ENCODE measurements at regions of chr1 and their contacts with region 1.

Region 1: GRCh38 chr1:41573785-41574713 is 89.6 kb upstream of the EDN2 start:
- DNase-seq: peak; percentile 56
- ATAC-seq: peak; percentile 99
- H3K4me3 ChIP-seq: no peak overlapping the region
- H3K27ac ChIP-seq: no peak overlapping the region
- H3K4me1 ChIP-seq: peaks cover 14% of the 10 kb centered on the region
- H3K27me3 ChIP-seq: no peaks in the 10 kb centered on the region
- CTCF ChIP-seq: peak; percentile 95 to 98 (median 96); a peak in 5 of 6 replicates
- EP300 ChIP-seq: no peak
- POLR2A ChIP-seq: no peak
- RAD21 ChIP-seq: peak; percentile 99

Region 2: DNA sequence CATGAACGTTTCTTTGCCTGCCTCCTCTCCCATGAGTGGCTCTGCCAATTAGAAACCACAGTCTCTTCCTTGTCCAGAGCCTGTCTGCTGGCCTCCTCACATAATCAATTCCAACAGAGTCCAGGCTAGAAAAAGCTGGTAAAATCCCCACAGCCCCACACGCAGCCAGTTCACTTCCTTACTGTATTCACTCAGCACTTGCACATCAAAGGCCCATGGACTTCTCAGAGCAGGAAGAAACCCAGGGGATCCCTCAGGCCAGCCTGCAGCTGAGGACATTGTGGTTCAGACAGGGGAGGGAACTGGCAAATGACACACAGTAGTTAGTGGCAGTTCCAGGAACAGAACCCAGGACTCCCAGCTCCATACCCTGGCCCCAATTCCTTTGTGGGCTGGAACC is 82.0 kb after region 1 on chr1:
- CTCF ChIA-PET with region 1: interaction called, 66 read pairs
- POLR2A ChIA-PET with region 1: interaction called, 3 read pairs
- RAD21 ChIA-PET with region 1: interaction called, 58 read pairs
- SMC1A ChIA-PET with region 1: interaction called, 126 read pairs
- in situ Hi-C with region 1: no loop called
- intact Hi-C with region 1: loop called (anchors 2 kb)
- DNase-seq: no peak
- ATAC-seq: peak; percentile 42
- H3K4me3 ChIP-seq: no peak overlapping the region
- H3K27ac ChIP-seq: no peak overlapping the region
- H3K4me1 ChIP-seq: peaks cover 16% of the 10 kb centered on the region
- H3K27me3 ChIP-seq: no peaks in the 10 kb centered on the region
- CTCF ChIP-seq: no peak
- EP300 ChIP-seq: no peak
- POLR2A ChIP-seq: no peak
- RAD21 ChIP-seq: no peak

Region 3: GRCh38 chr1:41751804-41752513 is 177.9 kb after region 1 on chr1:
- CTCF ChIA-PET with region 1: interaction called, 8 read pairs
- POLR2A ChIA-PET with region 1: no interaction called
- RAD21 ChIA-PET with region 1: interaction called, 7 read pairs
- SMC1A ChIA-PET with region 1: interaction called, 10 read pairs
- in situ Hi-C with region 1: no loop called
- intact Hi-C with region 1: no loop called
- DNase-seq: peak; percentile 86
- ATAC-seq: peak; percentile 83
- H3K4me3 ChIP-seq: peak overlapping the region; percentile 18; the same call in 1 of the 2 replicates
- H3K27ac ChIP-seq: peak overlapping the region; percentile 83
- H3K4me1 ChIP-seq: peaks cover 55% of the 10 kb centered on the region
- H3K27me3 ChIP-seq: no peaks in the 10 kb centered on the region
- CTCF ChIP-seq: no peak
- EP300 ChIP-seq: peak; percentile 77 to 80; a peak in 3 of 4 replicates
- POLR2A ChIP-seq: 0 out of 2 replicates have a peak, but pooled peaks have one; percentile 17
- RAD21 ChIP-seq: no peak; the same call in 1 of the 2 replicates

Region 4: GRCh38 chr1:41802532-41803501 is 228.8 kb after region 1 on chr1:
- CTCF ChIA-PET with region 1: interaction called, 3 read pairs
- POLR2A ChIA-PET with region 1: no interaction called
- RAD21 ChIA-PET with region 1: interaction called, 4 read pairs
- SMC1A ChIA-PET with region 1: interaction called, 14 read pairs
- in situ Hi-C with region 1: no loop called
- intact Hi-C with region 1: no loop called
- DNase-seq: peak; percentile 85
- ATAC-seq: peak; percentile 50
- H3K4me3 ChIP-seq: no peak overlapping the region
- H3K27ac ChIP-seq: peak overlapping the region; percentile 74
- H3K4me1 ChIP-seq: peaks cover 86% of the 10 kb centered on the region
- H3K27me3 ChIP-seq: no peaks in the 10 kb centered on the region
- CTCF ChIP-seq: no peak
- EP300 ChIP-seq: peak in 1 of 2 experiments; percentile 44; a peak in 2 of 4 replicates
- POLR2A ChIP-seq: no peak
- RAD21 ChIP-seq: no peak

Region 5: GRCh38 chr1:41891199-41891896 is 317.3 kb after region 1 on chr1:
- CTCF ChIA-PET with region 1: interaction called, 8 read pairs
- POLR2A ChIA-PET with region 1: no interaction called
- RAD21 ChIA-PET with region 1: interaction called, 3 read pairs
- SMC1A ChIA-PET with region 1: interaction called, 5 read pairs
- in situ Hi-C with region 1: no loop called
- intact Hi-C with region 1: loop called (anchors 1 kb)
- DNase-seq: peak; percentile 68
- ATAC-seq: peak; percentile 98
- H3K4me3 ChIP-seq: peak overlapping the region; percentile 66
- H3K27ac ChIP-seq: peak overlapping the region; percentile 75
- H3K4me1 ChIP-seq: peaks cover 15% of the 10 kb centered on the region
- H3K27me3 ChIP-seq: no peaks in the 10 kb centered on the region
- CTCF ChIP-seq: peak; percentile 39 to 42 (median 41); a peak in 5 of 6 replicates
- EP300 ChIP-seq: peak; percentile 4 to 26; a peak in 1 of 4 replicates
- POLR2A ChIP-seq: peak; percentile 73
- RAD21 ChIP-seq: peak; percentile 72